Activated CD8-positive, alpha-beta T cell treated with anti-CD3 and anti-CD28 coated beads for 36 hours (primary cell): ENCODE measurements at regions of chr2 and their contacts with region 1.

Region 1: GRCh38 chr2:161063157-161063954 is 96.9 kb upstream of the TANK start:
- DNase-seq: peak; percentile 80
- ATAC-seq: peak; percentile 93
- H3K4me3 Mint-ChIP-seq: no peak overlapping the region
- H3K27ac Mint-ChIP-seq: no peak overlapping the region
- H3K4me1 Mint-ChIP-seq: peaks cover 9% of the 10 kb centered on the region
- H3K27me3 Mint-ChIP-seq: peaks cover 1% of the 10 kb centered on the region
- CTCF ChIP-seq: peak; percentile 93

Region 2: GRCh38 chr2:160826496-160826895 is 236.9 kb before region 1 on chr2:
- CTCF ChIA-PET with region 1: no interaction called
- POLR2A ChIA-PET with region 1: no interaction called
- intact Hi-C with region 1: no loop called
- DNase-seq: no peak
- ATAC-seq: no peak
- H3K4me3 Mint-ChIP-seq: no peak overlapping the region
- H3K27ac Mint-ChIP-seq: no peak overlapping the region
- H3K4me1 Mint-ChIP-seq: no peaks in the 10 kb centered on the region
- H3K27me3 Mint-ChIP-seq: peaks cover 1% of the 10 kb centered on the region
- CTCF ChIP-seq: no peak

Region 3: DNA sequence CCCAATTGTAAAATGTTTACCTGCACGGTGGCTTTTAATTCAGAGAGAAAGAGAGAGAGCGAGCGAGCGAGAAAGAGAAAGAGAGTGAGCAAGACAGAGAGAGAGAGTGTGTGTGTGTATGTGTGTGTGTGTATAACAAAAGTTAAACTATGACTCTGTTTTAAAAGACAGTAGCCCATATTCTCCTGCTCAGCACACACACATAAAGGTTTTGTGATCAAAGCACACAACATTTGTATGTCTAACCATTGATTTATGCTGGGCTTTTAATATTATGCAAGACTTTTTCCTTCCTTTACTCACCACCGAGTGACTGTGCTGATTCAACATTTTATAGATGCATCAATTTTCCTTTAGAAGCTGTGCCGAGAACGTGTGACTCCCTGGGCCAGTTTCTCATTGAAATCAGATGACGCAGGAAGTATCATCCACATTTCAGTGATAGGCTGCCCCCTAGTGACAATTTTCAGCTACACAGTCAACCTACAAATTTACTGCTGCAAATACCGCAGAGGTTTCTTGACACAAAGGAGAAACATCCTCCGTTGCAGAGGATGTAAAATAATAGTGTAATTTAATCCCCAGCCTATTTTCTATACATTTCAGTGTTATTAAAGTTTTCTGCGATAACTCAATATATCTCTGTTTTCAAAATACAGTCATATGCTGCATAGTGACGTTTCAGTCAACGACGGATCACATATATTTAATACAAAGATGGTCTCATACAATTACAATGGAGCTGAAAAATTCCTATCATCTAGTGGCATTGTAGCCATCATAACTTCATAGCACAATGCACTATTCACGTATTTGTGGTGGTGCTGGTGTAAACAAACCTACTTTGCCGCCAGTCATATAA is 69.0 kb before region 1 on chr2:
- CTCF ChIA-PET with region 1: interaction called, 31 read pairs
- POLR2A ChIA-PET with region 1: no interaction called
- intact Hi-C with region 1: no loop called
- DNase-seq: peak; percentile 84
- ATAC-seq: peak; percentile 93
- H3K4me3 Mint-ChIP-seq: no peak overlapping the region
- H3K27ac Mint-ChIP-seq: no peak overlapping the region
- H3K4me1 Mint-ChIP-seq: peaks cover 7% of the 10 kb centered on the region
- H3K27me3 Mint-ChIP-seq: no peaks in the 10 kb centered on the region
- CTCF ChIP-seq: peak; percentile 90

Region 4: GRCh38 chr2:161052214-161052613 is 11.1 kb before region 1 on chr2:
- CTCF ChIA-PET with region 1: interaction called, 26 read pairs
- POLR2A ChIA-PET with region 1: interaction called, 3 read pairs
- intact Hi-C with region 1: no loop called
- DNase-seq: no peak
- ATAC-seq: no peak
- H3K4me3 Mint-ChIP-seq: no peak overlapping the region
- H3K27ac Mint-ChIP-seq: no peak overlapping the region
- H3K4me1 Mint-ChIP-seq: no peaks in the 10 kb centered on the region
- H3K27me3 Mint-ChIP-seq: peaks cover 21% of the 10 kb centered on the region
- CTCF ChIP-seq: no peak

Region 5: DNA sequence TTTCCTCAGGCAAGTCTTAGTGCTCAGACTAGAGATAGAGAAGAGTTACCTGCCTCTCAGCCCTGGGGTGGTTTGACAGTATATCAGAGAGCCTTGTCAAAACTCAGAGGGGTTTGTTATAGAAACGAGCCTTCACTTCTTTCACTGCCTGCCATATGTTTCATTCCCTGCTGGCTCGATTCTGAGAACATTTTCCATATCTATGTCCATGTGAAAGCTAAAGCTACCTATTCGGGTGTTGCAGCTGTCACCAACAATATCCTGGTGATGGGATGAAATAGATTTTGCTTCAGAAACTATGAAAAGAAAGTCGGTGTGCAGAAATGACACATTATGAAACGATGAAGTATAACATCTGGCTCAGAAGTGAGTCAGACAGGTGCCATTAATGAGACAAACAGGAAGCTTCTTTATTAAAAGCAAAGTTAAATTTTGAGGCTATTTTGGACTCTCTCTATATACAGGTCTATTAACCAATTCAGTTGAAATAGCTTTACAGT is 40.7 kb after region 1 on chr2:
- CTCF ChIA-PET with region 1: interaction called, 25 read pairs
- POLR2A ChIA-PET with region 1: no interaction called
- intact Hi-C with region 1: no loop called
- DNase-seq: no peak
- ATAC-seq: peak; percentile 85
- H3K4me3 Mint-ChIP-seq: no peak overlapping the region
- H3K27ac Mint-ChIP-seq: no peak overlapping the region
- H3K4me1 Mint-ChIP-seq: peaks cover 20% of the 10 kb centered on the region
- H3K27me3 Mint-ChIP-seq: peaks cover 1% of the 10 kb centered on the region
- CTCF ChIP-seq: no peak

Region 6: GRCh38 chr2:161166538-161167409 is 103.4 kb after region 1 on chr2:
- CTCF ChIA-PET with region 1: interaction called, 11 read pairs
- POLR2A ChIA-PET with region 1: no interaction called
- intact Hi-C with region 1: no loop called
- DNase-seq: peak; percentile 87
- ATAC-seq: peak; percentile 89
- H3K4me3 Mint-ChIP-seq: peak overlapping the region; percentile 47
- H3K27ac Mint-ChIP-seq: peak overlapping the region; percentile 92
- H3K4me1 Mint-ChIP-seq: peaks cover 90% of the 10 kb centered on the region
- H3K27me3 Mint-ChIP-seq: no peaks in the 10 kb centered on the region
- CTCF ChIP-seq: no peak

Region 7: GRCh38 chr2:161273038-161273760 is 209.8 kb after region 1 on chr2:
- CTCF ChIA-PET with region 1: interaction called, 18 read pairs
- POLR2A ChIA-PET with region 1: no interaction called
- intact Hi-C with region 1: no loop called
- DNase-seq: peak; percentile 34
- ATAC-seq: peak; percentile 73
- H3K4me3 Mint-ChIP-seq: no peak overlapping the region
- H3K27ac Mint-ChIP-seq: no peak overlapping the region
- H3K4me1 Mint-ChIP-seq: no peaks in the 10 kb centered on the region
- H3K27me3 Mint-ChIP-seq: peaks cover 4% of the 10 kb centered on the region
- CTCF ChIP-seq: peak; percentile 90